ENCODE measurements at regions of chr21 and their contacts with region 1.

Region 1: GRCh38 chr21:36756527-36756926 is 57.6 kb downstream of the SIM2 start:
- DNase-seq: no peak
- ATAC-seq: no peak
- H3K4me3 Mint-ChIP-seq: no peak overlapping the region
- H3K27ac Mint-ChIP-seq: no peak overlapping the region
- H3K4me1 Mint-ChIP-seq: no peaks in the 10 kb centered on the region
- H3K27me3 Mint-ChIP-seq: no peaks in the 10 kb centered on the region

Region 2: DNA sequence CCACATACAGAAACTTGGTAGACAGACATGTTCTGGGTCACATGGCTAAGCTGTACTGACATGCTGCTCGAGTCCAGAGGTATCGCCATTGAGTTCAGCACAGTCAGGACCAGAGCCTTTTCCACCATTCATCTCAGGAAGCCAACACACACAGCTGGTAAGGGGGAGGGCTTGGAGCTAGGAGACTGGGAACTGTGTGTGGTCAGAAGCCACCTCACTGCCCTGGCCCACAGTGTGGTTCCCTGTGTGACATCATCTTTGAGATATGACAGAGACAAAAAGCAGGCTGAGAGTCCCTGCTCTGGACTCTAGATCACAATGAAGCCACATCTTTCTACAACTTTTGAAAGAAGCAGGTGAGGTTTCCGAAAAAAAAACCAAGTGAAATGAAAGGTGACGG is 49.6 kb after region 1 on chr21:
- CTCF ChIA-PET with region 1: no interaction called
- POLR2A ChIA-PET with region 1: no interaction called
- intact Hi-C with region 1: loop called in 1 of 2 experiments (anchors 5 kb)
- DNase-seq: peak; percentile 11
- ATAC-seq: peak; percentile 30
- H3K4me3 Mint-ChIP-seq: no peak overlapping the region
- H3K27ac Mint-ChIP-seq: no peak overlapping the region
- H3K4me1 Mint-ChIP-seq: no peaks in the 10 kb centered on the region
- H3K27me3 Mint-ChIP-seq: no peaks in the 10 kb centered on the region